ENCODE measurements at regions of chr19 and their contacts with region 1.

Region 1: DNA sequence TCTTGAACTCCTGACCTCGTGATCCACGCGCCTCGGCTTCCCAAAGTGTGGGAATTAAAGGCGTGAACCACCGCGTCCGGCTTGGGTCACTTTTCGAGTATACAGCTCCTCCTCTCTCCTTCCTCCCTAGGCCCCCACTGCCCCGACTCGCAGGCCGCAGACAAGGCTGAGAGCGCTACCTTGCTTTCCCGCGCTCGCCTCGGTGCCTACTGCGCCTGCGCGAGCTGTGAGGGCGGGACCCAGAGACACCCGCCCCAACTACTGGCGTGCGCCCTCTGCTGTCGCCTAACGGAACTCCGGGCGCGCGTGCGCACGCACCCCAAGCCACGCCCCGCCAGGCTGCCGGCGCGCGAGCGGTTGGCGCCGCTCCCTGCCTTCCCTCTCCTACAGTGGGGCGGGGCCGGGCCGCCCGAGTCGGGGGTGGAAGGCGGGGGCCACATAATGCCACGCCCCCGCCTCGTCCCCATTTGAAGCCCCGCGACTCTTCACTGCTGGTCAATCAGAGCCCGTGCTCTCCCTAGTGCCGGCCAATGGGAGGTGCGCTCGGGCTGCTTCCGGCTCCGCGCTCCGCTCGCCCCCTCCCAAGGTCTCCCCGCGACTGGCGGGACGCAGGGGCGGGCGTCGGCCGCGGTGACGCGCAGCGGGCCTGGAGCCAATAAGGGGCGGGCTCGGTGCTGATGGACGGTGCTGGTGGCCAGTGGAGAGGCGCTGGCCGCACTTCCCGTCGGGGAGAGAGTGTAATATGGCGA is at the start of gene RAB8A:
- DNase-seq: peak; percentile 98 to 100 (median 99)
- ATAC-seq: peak; percentile 93
- H3K4me3 Mint-ChIP-seq: peak within 1 kb of the TSS; percentile 94 to 99 (median 96)
- H3K27ac Mint-ChIP-seq: peak within 1 kb of the TSS; percentile 92 to 100 (median 98)
- H3K4me1 Mint-ChIP-seq: peaks cover 12 to 46% (median 41%) of the 10 kb centered on the region in 4 donors
- H3K27me3 Mint-ChIP-seq: no peaks in the 10 kb centered on the region
- polyA plus RNA-seq, gene RAB8A: 65.6 to 69.8 (median 66.1) TPM

Region 2: GRCh38 chr19:16041299-16041990 is 69.9 kb before region 1 on chr19:
- POLR2A ChIA-PET with region 1: interaction called, 12 read pairs
- DNase-seq: peak; percentile 56 to 84 (median 72)
- ATAC-seq: peak; percentile 71 to 92
- H3K4me3 Mint-ChIP-seq: peak overlapping the region in 9 of 10 donors; percentile 12 to 68 (median 46)
- H3K27ac Mint-ChIP-seq: peak overlapping the region in 2 of 10 donors; percentile 14 to 75
- H3K4me1 Mint-ChIP-seq: peaks cover 4 to 16% (median 10%) of the 10 kb centered on the region in 4 donors
- H3K27me3 Mint-ChIP-seq: no peaks in the 10 kb centered on the region

Region 3: GRCh38 chr19:16062789-16063188 is 48.5 kb before region 1 on chr19:
- POLR2A ChIA-PET with region 1: interaction called, 12 read pairs
- DNase-seq: peak; percentile 37 to 77 (median 60)
- ATAC-seq: peak in 1 of 2 donors; percentile 35
- H3K4me3 Mint-ChIP-seq: peak overlapping the region in 2 of 10 donors; percentile 25 to 39
- H3K27ac Mint-ChIP-seq: peak overlapping the region in 5 of 10 donors; percentile 28 to 76 (median 49)
- H3K4me1 Mint-ChIP-seq: peaks cover 17 to 29% (median 22%) of the 10 kb centered on the region in 4 donors
- H3K27me3 Mint-ChIP-seq: no peaks in the 10 kb centered on the region

Region 4: DNA sequence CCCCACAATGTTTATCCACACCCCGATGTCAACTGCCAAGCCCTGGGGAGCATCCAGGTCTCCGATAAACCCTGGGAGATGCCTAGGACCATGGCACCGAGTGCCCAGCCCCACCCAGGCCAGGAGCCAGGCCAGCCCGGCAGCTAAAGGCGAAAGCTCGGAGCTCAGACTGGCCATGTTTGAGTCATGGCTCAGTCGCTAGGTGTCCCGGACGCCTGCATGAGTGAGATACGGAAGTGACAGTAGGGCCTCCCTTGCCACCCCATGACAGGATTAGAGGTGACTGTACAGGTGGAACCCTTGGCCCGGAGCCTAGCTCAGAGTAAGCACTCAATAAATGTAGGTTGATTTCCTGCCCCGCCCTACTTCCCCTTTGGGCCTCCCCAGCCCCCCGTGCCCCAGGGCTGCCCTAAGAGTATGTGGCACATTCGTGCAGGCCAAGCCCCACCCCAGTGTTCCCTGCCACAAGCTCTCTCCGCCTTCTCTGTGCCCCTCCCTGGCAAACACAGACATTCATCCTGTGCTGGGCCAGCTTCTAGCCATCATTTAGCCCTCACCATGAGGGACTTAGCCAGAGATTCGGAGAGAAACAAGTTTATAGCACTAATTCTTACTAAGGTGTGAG is 40.9 kb before region 1 on chr19:
- POLR2A ChIA-PET with region 1: interaction called, 30 read pairs
- DNase-seq: peak; percentile 67 to 97 (median 86)
- ATAC-seq: peak; percentile 91 to 94
- H3K4me3 Mint-ChIP-seq: peak overlapping the region in 4 of 10 donors; percentile 70 to 79 (median 78)
- H3K27ac Mint-ChIP-seq: no peak overlapping the region
- H3K4me1 Mint-ChIP-seq: peaks cover 25 to 41% (median 33%) of the 10 kb centered on the region in 4 donors
- H3K27me3 Mint-ChIP-seq: no peaks in the 10 kb centered on the region

Region 5: DNA sequence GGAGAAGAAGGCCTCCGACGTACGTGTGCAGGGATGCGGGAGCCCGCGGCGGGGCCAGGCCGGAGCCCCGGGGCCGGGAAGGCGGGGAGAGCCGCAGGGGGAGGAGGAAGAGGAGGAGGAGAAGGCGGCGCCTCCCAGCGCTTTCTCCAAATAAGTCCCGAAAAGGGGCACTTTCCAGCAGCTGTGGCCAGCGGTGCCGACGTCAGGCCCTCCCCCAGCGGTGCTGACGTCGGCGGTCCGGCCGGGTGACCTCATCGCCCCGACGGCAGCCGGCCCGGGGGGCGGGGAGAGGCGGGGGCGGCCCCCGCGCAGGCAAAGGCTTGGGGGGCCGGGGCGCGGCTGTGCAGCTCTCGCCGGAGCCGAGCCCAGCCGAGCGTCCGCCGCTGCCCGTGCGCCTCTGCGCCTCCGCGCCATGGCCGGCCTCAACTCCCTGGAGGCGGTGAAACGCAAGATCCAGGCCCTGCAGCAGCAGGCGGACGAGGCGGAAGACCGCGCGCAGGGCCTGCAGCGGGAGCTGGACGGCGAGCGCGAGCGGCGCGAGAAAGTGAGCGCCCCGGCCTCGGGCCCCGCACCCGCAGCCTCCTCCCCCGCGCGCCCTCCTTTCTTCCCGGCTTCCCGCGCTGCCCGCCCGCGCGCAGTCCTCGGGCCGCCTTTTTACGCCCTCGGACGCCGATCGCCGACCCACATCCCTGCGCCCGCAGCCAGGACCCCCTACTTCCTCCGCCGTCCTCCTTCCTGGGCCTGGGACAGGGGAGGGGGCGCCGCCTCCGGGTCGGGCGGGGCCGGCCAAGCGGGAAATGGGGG is 35.0 kb before region 1 on chr19 and contains the start of gene TPM4:
- POLR2A ChIA-PET with region 1: interaction called, 30 read pairs
- DNase-seq: peak; percentile 53 to 86 (median 68)
- ATAC-seq: peak; percentile 35 to 43
- H3K4me3 Mint-ChIP-seq: peak within 1 kb of the TSS; percentile 79 to 93 (median 86)
- H3K27ac Mint-ChIP-seq: peak within 1 kb of the TSS; percentile 90 to 98 (median 96)
- H3K4me1 Mint-ChIP-seq: peaks cover 32 to 78% (median 70%) of the 10 kb centered on the region in 4 donors
- H3K27me3 Mint-ChIP-seq: no peaks in the 10 kb centered on the region
- polyA plus RNA-seq, gene TPM4: 27.4 to 30.8 (median 29.3) TPM

Region 6: DNA sequence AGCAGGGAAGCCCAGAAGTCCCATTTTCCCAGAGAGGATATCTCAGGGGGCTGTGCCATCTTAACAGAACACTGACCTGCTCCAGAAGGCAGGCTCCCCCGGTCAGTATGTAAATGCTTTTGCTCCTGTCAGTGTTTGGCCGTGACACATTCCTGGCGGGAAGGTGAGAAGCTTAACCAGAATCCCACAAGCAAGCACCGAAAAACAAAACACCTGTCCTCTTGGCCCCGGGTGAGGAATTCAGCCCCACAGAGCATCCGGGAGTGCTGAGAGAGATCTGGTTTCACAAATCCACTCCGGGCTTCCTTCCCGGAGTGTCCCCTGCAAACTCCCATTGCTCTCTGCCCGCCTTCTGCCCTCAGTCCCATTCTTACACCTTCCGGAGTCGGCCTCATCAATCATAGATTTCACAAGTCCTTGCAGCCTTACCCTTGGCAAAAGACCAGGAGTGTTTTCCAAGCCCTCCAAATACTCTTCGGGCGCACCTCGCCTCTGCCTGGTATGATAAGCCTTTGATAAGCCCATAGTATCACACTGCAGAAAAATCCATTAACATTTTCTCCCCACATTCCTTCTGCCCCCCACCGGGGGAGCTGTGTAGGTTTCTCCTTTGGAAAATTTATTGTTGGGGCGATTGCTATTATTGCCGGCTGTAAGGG is 22.9 kb before region 1 on chr19:
- POLR2A ChIA-PET with region 1: interaction called, 11 read pairs
- DNase-seq: peak in 1 of 10 donors; percentile 8
- ATAC-seq: no peak
- H3K4me3 Mint-ChIP-seq: peak overlapping the region in 2 of 10 donors; percentile 18 to 40
- H3K27ac Mint-ChIP-seq: peak overlapping the region in 6 of 10 donors; percentile 32 to 71 (median 62)
- H3K4me1 Mint-ChIP-seq: peaks cover 12 to 53% (median 34%) of the 10 kb centered on the region in 4 donors
- H3K27me3 Mint-ChIP-seq: no peaks in the 10 kb centered on the region

Region 7: GRCh38 chr19:16125737-16126495 is 14.6 kb after region 1 on chr19:
- POLR2A ChIA-PET with region 1: no interaction called
- DNase-seq: no peak
- ATAC-seq: no peak
- H3K4me3 Mint-ChIP-seq: no peak overlapping the region
- H3K27ac Mint-ChIP-seq: peak overlapping the region in 3 of 10 donors; percentile 14 to 62 (median 60)
- H3K4me1 Mint-ChIP-seq: peaks cover 0 to 2% (median 0%) of the 10 kb centered on the region in 4 donors
- H3K27me3 Mint-ChIP-seq: no peaks in the 10 kb centered on the region

Region 8: DNA sequence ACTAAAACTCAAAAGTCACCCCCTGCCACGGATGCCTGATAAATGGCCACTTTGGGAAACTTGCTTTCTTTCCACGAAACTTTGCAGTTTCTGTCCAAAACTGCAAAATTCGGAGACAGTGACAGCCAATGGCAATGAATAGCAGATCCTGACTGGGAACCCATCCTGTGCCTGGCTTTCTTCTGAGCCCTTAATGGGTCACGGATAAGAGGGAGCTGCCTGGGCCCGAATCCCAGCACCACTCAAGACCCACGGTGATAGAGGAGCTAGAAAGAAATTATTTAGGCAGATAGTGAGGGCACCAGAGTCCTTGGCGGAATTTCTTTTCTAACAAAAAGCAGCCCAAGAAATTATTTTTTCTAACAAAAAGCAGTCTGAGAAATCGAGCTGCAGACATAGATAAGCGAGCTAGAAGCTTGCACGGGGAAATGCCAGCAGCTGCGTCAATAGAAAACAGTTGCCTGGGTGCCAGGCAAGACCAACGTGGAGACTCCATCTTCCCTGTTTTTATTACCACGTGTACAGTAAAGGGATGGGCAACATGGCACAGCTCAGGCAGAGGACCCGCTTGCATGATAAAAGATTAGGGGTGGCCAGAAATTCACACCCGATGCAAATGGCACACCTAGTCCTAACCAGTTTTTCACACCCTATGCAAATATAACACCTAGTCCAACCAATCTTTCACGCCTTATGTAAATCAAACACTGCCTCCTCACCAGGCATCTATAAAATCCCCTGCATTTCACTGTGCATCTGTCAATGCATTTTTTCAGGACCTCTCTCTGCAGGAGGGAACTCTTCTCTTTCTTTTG is 25.1 kb after region 1 on chr19:
- POLR2A ChIA-PET with region 1: no interaction called
- DNase-seq: no peak
- ATAC-seq: no peak
- H3K4me3 Mint-ChIP-seq: no peak overlapping the region
- H3K27ac Mint-ChIP-seq: peak overlapping the region in 3 of 10 donors; percentile 31 to 86 (median 55)
- H3K4me1 Mint-ChIP-seq: peaks cover 5 to 57% (median 13%) of the 10 kb centered on the region in 4 donors
- H3K27me3 Mint-ChIP-seq: no peaks in the 10 kb centered on the region

Region 9: GRCh38 chr19:16157601-16158000 is 46.3 kb after region 1 on chr19:
- POLR2A ChIA-PET with region 1: no interaction called
- DNase-seq: no peak
- ATAC-seq: no peak
- H3K4me3 Mint-ChIP-seq: no peak overlapping the region
- H3K27ac Mint-ChIP-seq: peak overlapping the region in 1 of 10 donors; percentile 51
- H3K4me1 Mint-ChIP-seq: peaks cover 9 to 23% (median 12%) of the 10 kb centered on the region in 4 donors
- H3K27me3 Mint-ChIP-seq: no peaks in the 10 kb centered on the region

Measured in naive thymus-derived CD8-positive, alpha-beta T cell (primary cell).